B cell (primary cell): ENCODE measurements at regions of chr6 and their contacts with region 1.

Region 1: DNA sequence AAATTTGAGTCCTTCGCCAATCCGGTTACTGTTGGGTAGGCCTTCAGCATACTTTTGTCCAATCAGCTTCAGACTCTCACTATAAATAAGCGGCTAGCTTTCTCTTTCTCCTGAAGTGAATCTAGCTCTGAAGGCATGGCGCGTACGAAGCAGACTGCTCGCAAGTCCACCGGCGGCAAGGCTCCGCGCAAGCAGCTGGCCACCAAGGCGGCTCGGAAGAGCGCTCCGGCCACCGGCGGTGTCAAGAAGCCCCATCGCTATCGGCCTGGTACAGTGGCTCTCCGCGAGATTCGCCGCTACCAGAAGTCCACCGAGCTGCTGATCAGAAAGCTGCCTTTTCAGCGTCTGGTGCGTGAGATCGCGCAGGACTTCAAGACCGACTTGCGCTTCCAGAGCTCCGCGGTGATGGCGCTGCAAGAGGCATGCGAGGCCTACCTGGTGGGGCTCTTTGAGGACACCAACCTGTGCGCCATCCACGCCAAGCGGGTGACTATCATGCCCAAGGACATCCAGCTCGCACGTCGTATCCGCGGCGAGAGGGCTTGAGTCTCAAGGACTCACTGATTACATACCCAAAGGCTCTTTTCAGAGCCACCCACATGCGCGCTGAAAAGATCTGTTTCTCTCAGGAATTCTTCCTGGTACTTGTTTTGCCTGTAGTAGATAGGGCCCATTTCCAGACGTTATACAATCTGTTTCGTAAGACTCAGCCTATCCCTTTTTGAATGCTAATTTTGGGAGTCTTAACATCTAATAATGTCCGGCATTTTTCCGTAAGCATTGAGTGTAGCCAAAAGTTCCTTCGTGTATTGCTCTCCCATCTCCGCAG is 102.0 kb downstream of the OR2B2 start:
- DNase-seq: peak; percentile 96
- ATAC-seq: peak; percentile 50
- H3K4me3 ChIP-seq: peak overlapping the region; percentile 66 to 94 (median 84)
- H3K4me3 Mint-ChIP-seq: peak overlapping the region; percentile 98
- H3K27ac ChIP-seq: peak overlapping the region; percentile 82
- H3K27ac Mint-ChIP-seq: peak overlapping the region; percentile 99
- H3K4me1 ChIP-seq: peaks cover 37 to 47% of the 10 kb centered on the region in 2 donors
- H3K4me1 Mint-ChIP-seq: peaks cover 58% of the 10 kb centered on the region
- H3K27me3 ChIP-seq: no peaks in the 10 kb centered on the region
- H3K27me3 Mint-ChIP-seq: no peaks in the 10 kb centered on the region
- CTCF ChIP-seq: no peak

Region 2: DNA sequence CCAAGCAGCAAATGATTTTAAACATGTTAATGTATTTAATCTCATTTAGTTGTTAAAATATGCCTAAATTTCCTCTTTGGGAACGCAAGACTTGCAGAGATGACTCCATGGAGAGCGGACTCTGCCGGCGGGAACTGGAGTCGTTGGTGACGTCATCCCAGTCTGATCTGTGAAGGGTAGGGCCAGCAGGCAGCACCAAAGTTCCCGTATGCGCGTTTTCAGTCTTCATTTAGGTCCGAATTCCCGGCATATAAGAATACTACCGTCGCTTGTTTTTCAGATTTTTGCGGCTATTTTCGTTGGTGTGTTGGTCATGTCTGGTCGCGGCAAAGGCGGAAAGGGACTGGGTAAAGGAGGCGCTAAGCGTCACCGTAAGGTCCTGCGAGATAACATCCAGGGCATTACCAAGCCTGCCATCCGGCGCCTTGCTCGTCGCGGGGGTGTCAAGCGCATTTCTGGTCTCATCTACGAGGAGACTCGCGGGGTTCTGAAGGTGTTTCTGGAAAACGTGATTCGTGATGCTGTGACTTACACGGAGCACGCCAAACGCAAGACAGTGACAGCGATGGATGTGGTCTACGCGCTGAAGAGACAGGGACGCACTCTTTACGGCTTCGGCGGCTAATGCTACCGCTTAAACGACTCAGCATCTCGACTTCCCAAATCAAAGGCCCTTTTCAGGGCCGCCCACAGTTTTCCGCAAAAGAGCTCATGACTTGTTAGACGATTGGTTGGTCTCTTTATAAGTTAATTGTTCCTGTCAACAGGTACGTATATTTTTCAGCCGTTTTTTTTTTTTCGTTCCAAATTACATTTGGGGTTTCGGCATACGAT is 1605.6 kb before region 1 on chr6:
- CTCF ChIA-PET with region 1: no interaction called
- POLR2A ChIA-PET with region 1: interaction called, 9 read pairs
- intact Hi-C with region 1: loop called (anchors 5 kb)
- DNase-seq: peak; percentile 96
- ATAC-seq: peak; percentile 65
- H3K4me3 ChIP-seq: peak overlapping the region; percentile 76 to 94 (median 81)
- H3K4me3 Mint-ChIP-seq: no peak overlapping the region
- H3K27ac ChIP-seq: peak overlapping the region; percentile 88 to 96
- H3K27ac Mint-ChIP-seq: no peak overlapping the region
- H3K4me1 ChIP-seq: peaks cover 26 to 38% of the 10 kb centered on the region in 2 donors
- H3K4me1 Mint-ChIP-seq: peaks cover 30% of the 10 kb centered on the region
- H3K27me3 ChIP-seq: no peaks in the 10 kb centered on the region
- H3K27me3 Mint-ChIP-seq: no peaks in the 10 kb centered on the region
- CTCF ChIP-seq: no peak

Region 3: GRCh38 chr6:27177485-27178406 is 632.4 kb before region 1 on chr6:
- CTCF ChIA-PET with region 1: interaction called, 3 read pairs
- POLR2A ChIA-PET with region 1: interaction called, 11 read pairs
- intact Hi-C with region 1: no loop called
- DNase-seq: peak; percentile 90
- ATAC-seq: peak; percentile 86
- H3K4me3 ChIP-seq: peak overlapping the region; percentile 88 to 100 (median 98)
- H3K4me3 Mint-ChIP-seq: peak overlapping the region; percentile 96
- H3K27ac ChIP-seq: peak overlapping the region; percentile 34 to 78
- H3K27ac Mint-ChIP-seq: peak overlapping the region; percentile 91
- H3K4me1 ChIP-seq: peaks cover 0 to 7% of the 10 kb centered on the region in 2 donors
- H3K4me1 Mint-ChIP-seq: peaks cover 15% of the 10 kb centered on the region
- H3K27me3 ChIP-seq: no peaks in the 10 kb centered on the region
- H3K27me3 Mint-ChIP-seq: no peaks in the 10 kb centered on the region
- CTCF ChIP-seq: peak; percentile 71

Region 4: GRCh38 chr6:27772261-27773001 is 37.7 kb before region 1 on chr6:
- CTCF ChIA-PET with region 1: interaction called, 20 read pairs
- POLR2A ChIA-PET with region 1: no interaction called
- intact Hi-C with region 1: no loop called
- DNase-seq: peak; percentile 87
- ATAC-seq: peak; percentile 88
- H3K4me3 ChIP-seq: no peak overlapping the region
- H3K4me3 Mint-ChIP-seq: peak overlapping the region; percentile 65
- H3K27ac ChIP-seq: peak overlapping the region in 1 of 2 donors; percentile 2
- H3K27ac Mint-ChIP-seq: peak overlapping the region; percentile 84
- H3K4me1 ChIP-seq: peaks cover 26 to 29% of the 10 kb centered on the region in 2 donors
- H3K4me1 Mint-ChIP-seq: peaks cover 36% of the 10 kb centered on the region
- H3K27me3 ChIP-seq: peaks cover 0 to 4% (median 2%) of the 10 kb centered on the region in 4 experiments
- H3K27me3 Mint-ChIP-seq: peaks cover 10% of the 10 kb centered on the region
- CTCF ChIP-seq: peak; percentile 93

Region 5: GRCh38 chr6:27785294-27785693 is 24.9 kb before region 1 on chr6:
- CTCF ChIA-PET with region 1: no interaction called
- POLR2A ChIA-PET with region 1: no interaction called
- intact Hi-C with region 1: no loop called
- DNase-seq: no peak
- ATAC-seq: no peak
- H3K4me3 ChIP-seq: no peak overlapping the region
- H3K4me3 Mint-ChIP-seq: no peak overlapping the region
- H3K27ac ChIP-seq: no peak overlapping the region
- H3K27ac Mint-ChIP-seq: no peak overlapping the region
- H3K4me1 ChIP-seq: no peaks in the 10 kb centered on the region
- H3K4me1 Mint-ChIP-seq: no peaks in the 10 kb centered on the region
- H3K27me3 ChIP-seq: peaks cover 0 to 2% (median under 1%) of the 10 kb centered on the region in 4 experiments
- H3K27me3 Mint-ChIP-seq: peaks cover 22% of the 10 kb centered on the region
- CTCF ChIP-seq: no peak

Region 6: GRCh38 chr6:27825025-27825793 is 15.1 kb after region 1 on chr6:
- CTCF ChIA-PET with region 1: interaction called, 6 read pairs
- POLR2A ChIA-PET with region 1: interaction called, 35 read pairs
- intact Hi-C with region 1: loop called (anchors 1 kb)
- DNase-seq: peak; percentile 41
- ATAC-seq: no peak
- H3K4me3 ChIP-seq: peak overlapping the region; percentile 66 to 95 (median 88)
- H3K4me3 Mint-ChIP-seq: peak overlapping the region; percentile 95
- H3K27ac ChIP-seq: peak overlapping the region; percentile 79 to 90
- H3K27ac Mint-ChIP-seq: peak overlapping the region; percentile 97
- H3K4me1 ChIP-seq: peaks cover 16 to 20% of the 10 kb centered on the region in 2 donors
- H3K4me1 Mint-ChIP-seq: peaks cover 35% of the 10 kb centered on the region
- H3K27me3 ChIP-seq: no peaks in the 10 kb centered on the region
- H3K27me3 Mint-ChIP-seq: no peaks in the 10 kb centered on the region
- CTCF ChIP-seq: no peak

Region 7: DNA sequence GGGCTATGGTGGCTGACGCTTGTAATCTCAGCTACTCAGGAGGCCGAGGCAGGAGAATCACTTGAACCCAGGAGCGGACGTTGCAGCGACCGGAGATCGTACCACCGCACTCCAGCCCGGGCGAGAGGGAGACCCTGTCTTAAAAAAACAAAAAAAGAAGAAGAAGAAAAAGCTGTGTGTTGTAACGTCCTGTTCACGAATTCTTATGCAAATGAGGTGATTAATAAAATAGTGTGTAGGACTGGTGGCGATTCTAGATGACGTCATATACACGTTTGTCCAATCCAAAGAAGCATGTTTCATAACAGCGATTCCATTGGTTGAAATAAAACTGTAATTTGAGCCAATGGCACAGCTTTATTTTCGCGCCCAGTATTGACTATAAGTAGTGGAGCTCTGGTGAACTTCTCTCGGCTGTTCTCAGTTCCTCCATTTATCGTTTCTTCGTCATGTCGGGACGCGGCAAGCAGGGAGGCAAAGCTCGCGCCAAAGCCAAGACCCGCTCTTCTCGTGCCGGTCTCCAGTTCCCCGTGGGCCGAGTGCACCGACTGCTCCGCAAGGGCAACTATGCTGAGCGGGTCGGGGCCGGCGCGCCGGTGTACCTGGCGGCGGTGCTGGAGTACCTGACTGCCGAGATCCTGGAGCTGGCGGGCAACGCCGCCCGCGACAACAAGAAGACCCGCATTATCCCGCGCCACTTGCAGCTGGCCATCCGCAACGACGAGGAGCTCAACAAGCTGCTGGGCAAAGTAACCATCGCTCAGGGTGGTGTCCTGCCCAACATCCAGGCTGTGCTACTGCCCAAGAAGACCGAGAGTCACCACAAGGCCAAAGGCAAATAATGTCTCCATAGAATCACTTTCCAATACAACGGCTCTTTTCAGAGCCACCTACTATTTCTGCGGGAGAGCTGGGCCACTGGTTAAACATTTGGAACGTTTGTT is 55.0 kb after region 1 on chr6:
- CTCF ChIA-PET with region 1: interaction called, 34 read pairs
- POLR2A ChIA-PET with region 1: interaction called, 29 read pairs
- intact Hi-C with region 1: loop called (anchors 1 kb)
- DNase-seq: peak; percentile 97
- ATAC-seq: peak; percentile 80
- H3K4me3 ChIP-seq: peak overlapping the region; percentile 60 to 82 (median 69)
- H3K4me3 Mint-ChIP-seq: peak overlapping the region; percentile 97
- H3K27ac ChIP-seq: peak overlapping the region; percentile 81 to 83
- H3K27ac Mint-ChIP-seq: peak overlapping the region; percentile 97
- H3K4me1 ChIP-seq: peaks cover 13 to 35% of the 10 kb centered on the region in 2 donors
- H3K4me1 Mint-ChIP-seq: peaks cover 45% of the 10 kb centered on the region
- H3K27me3 ChIP-seq: no peaks in the 10 kb centered on the region
- H3K27me3 Mint-ChIP-seq: no peaks in the 10 kb centered on the region
- CTCF ChIP-seq: no peak

Region 8: DNA sequence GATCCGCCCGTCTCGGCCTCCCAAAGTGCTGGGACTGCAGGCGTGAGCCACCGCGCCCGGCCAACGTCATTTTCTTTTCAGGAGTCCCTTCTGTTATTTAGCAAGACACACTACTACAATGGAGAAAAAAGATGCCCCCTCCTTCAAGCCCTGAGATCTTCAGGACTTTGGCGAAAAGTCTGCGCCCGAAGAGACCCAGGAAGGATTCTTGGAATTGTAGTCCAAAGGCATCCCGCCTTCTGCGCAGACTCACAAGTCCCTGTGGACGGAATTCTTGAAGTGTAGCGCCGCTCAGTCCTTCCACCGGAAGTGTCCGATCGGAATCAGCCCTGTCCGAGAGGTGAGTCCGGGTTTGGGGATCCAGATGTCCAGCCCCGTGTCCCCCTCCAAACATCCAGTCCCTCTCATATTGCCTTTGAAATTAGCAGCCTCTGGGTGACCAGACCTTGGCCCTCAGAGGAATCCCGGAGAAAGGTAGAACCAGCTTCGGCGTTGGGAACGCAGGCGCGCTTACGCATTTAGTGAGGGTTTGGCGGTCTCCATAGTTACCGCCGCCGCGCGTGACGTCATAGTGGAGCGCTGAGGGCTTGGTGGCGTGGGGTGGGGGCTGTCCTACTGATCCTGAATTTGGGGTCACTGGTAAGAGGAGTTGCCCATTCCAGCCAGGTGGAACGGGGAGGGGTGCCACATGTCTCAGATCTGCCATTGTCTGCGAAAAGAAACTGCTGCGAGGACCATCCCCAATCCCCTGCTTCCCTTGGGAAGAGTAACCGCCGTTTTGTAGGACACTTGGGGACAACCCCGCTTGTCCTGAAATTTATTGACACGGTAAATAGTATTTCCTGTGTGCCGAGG is 270.7 kb after region 1 on chr6:
- CTCF ChIA-PET with region 1: no interaction called
- POLR2A ChIA-PET with region 1: no interaction called
- intact Hi-C with region 1: loop called (anchors 10 kb)
- DNase-seq: peak; percentile 98
- ATAC-seq: peak; percentile 67
- H3K4me3 ChIP-seq: peak overlapping the region; percentile 67 to 96 (median 88)
- H3K4me3 Mint-ChIP-seq: peak overlapping the region; percentile 92
- H3K27ac ChIP-seq: peak overlapping the region; percentile 94 to 100
- H3K27ac Mint-ChIP-seq: peak overlapping the region; percentile 98
- H3K4me1 ChIP-seq: peaks cover 10 to 22% of the 10 kb centered on the region in 2 donors
- H3K4me1 Mint-ChIP-seq: peaks cover 36% of the 10 kb centered on the region
- H3K27me3 ChIP-seq: no peaks in the 10 kb centered on the region
- H3K27me3 Mint-ChIP-seq: no peaks in the 10 kb centered on the region
- CTCF ChIP-seq: no peak